GM12878 (cell line): ENCODE measurements at regions of chr10 and their contacts with region 1.

Region 1: DNA sequence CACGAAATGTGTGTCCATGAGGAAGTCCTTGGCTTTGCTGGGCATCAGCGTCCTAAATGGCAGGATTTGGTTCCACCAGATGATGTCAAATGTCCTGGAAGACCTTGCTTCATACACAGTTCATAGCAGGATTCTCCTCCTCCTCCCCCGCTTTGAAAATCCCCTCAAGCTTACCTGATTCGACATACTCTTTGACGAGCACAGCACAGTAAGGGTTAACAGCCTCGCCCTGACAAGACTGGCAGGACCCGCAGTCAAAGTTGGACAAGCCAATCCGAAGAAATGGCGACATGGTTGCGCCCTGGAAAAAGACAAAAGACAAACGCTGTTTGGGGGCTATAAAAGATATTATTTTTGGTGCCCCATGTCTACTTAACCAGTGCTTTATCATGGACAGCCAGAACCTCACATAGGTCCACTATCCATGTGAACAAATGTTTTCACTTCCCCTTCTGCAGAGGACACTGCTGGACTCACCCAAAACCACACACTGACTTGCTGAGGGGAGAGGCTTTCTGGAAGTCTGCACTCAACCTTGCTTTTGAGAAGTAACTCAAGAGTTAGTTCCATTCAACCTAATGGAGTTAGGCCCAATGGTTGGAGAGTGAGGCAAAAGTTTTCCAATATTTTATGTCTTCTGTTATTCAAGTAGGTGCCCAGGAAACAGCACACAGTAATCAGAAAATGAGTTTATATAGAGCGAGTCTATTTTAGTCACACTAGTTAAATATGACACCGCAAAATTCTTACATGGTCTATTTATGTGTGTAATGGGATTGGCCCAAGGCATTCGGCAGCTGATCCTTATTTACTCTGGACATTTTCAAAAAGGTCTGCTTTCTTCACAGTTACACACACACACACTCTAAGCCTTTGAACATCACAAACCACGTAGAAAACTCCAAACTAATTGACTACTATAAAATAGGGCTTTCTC is 65.0 kb downstream of the PRKCQ start:
- DNase-seq: no peak
- ATAC-seq: peak; percentile 43; the same call in 1 of the 3 replicates
- H3K4me3 ChIP-seq: no peak overlapping the region
- H3K27ac ChIP-seq: no peak overlapping the region
- H3K4me1 ChIP-seq: no peaks in the 10 kb centered on the region
- H3K27me3 ChIP-seq: peaks cover 0 to 8% of the 10 kb centered on the region in 2 experiments; a peak in 1 of 4 replicates
- CTCF ChIP-seq: no peak
- EP300 ChIP-seq: no peak
- POLR2A ChIP-seq: no peak
- RAD21 ChIP-seq: no peak

Region 2: DNA sequence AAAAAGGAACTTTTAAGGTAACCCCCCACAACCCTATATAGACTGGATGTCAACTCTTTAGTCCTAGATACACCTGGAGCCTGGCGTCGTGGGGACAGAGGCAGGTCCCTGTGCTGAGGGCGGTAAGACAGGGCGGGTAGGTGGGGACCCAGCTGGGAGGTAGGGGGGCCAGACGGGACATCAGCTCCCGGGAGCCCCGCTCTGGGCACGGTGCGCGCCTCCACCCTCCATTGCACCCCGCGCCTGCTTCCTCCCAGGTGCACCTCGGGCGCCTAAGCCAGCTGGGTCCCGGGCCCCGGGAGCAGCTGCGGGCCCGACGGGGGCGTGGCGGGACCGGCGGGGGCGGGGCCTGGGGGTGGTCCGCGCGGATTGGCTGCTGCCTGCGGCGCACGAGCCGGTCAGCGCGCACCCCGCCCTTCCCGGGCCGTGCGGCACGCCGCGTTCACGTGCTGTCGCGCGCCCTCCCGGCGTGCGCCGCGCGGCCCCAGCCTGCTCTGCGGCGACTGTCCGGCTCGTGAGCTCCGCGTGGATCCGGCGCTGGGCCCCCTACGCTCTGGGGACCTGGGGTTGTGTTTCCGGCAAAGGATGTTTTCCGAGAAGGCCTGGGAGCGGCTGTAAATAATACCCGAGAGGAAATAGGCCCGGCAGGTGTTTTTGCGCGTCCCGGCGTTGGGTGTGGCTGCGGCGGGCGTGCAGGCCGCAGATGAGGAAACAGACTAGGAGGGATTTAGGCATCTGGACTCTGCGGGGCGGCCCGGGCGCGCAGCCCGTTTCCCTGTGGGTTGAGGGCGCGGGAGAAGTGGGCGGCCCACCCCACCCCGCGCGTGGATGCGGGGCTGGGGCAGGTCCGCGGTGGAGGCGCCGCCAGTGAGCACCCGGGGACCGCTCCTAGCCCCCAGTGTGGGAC is 351.5 kb before region 1 on chr10:
- CTCF ChIA-PET with region 1: no interaction called
- POLR2A ChIA-PET with region 1: interaction called, 10 read pairs
- RAD21 ChIA-PET with region 1: no interaction called
- SMC1A ChIA-PET with region 1: no interaction called
- in situ Hi-C with region 1: no loop called
- intact Hi-C with region 1: no loop called
- DNase-seq: peak; percentile 47
- ATAC-seq: peak; percentile 99
- H3K4me3 ChIP-seq: peak overlapping the region; percentile 67
- H3K27ac ChIP-seq: peak overlapping the region; percentile 83
- H3K4me1 ChIP-seq: no peaks in the 10 kb centered on the region; the same call in 1 of the 2 replicates
- H3K27me3 ChIP-seq: no peaks in the 10 kb centered on the region
- CTCF ChIP-seq: no peak
- EP300 ChIP-seq: no peak
- POLR2A ChIP-seq: peak; percentile 85
- RAD21 ChIP-seq: no peak

Region 3: DNA sequence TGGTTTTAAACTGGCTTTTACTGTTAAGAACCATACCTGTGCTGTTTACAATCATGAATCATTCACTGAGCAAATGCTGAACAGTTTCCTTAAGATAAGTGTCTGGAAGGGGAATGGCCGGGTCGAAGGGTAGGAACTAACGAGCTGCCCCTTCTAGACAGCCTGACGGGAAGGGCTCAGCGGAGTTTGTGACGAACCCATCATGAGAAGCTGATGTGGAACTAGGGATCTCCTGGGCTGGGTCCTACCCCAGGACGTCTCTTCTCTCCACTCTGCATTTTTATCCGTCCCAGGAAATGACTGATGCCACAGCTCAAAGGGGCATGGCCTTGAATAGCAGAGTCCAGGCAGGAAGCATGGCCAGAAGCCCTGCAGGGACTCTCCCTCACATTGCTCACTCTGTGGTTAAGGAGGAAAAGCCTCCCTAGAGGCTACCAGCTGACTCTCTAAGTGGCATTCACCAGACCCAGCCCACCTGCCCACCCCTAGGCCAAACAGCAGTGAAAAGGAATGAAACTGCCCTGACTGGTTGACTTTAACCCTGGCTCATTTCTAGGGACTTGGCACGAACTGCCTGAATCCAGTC is 200.4 kb before region 1 on chr10:
- CTCF ChIA-PET with region 1: no interaction called
- POLR2A ChIA-PET with region 1: no interaction called
- RAD21 ChIA-PET with region 1: no interaction called
- SMC1A ChIA-PET with region 1: no interaction called
- in situ Hi-C with region 1: no loop called
- intact Hi-C with region 1: no loop called
- DNase-seq: no peak
- ATAC-seq: no peak
- H3K4me3 ChIP-seq: no peak overlapping the region
- H3K27ac ChIP-seq: no peak overlapping the region
- H3K4me1 ChIP-seq: no peaks in the 10 kb centered on the region
- H3K27me3 ChIP-seq: 0 out of 4 replicates have a peak, but pooled peaks cover 0 to 4% of the 10 kb centered on the region in 2 experiments
- CTCF ChIP-seq: no peak
- EP300 ChIP-seq: no peak
- POLR2A ChIP-seq: no peak
- RAD21 ChIP-seq: no peak